Calu3 (cell line): ENCODE measurements at regions of chr3 and their contacts with region 1.

Region 1: GRCh38 chr3:50611464-50612233 is at the start of gene CISH:
- DNase-seq: peak; percentile 89
- H3K4me3 Mint-ChIP-seq: peak within 1 kb of the TSS; percentile 74
- H3K27ac Mint-ChIP-seq: peak within 1 kb of the TSS; percentile 24
- H3K4me1 Mint-ChIP-seq: peaks cover 28% of the 10 kb centered on the region
- H3K27me3 Mint-ChIP-seq: peaks cover 13% of the 10 kb centered on the region
- CTCF ChIP-seq: peak; percentile 28
- total RNA-seq, gene CISH: 1.4 and 1.6 TPM in 2 replicates

Region 2: GRCh38 chr3:50474717-50475116 is 136.9 kb before region 1 on chr3:
- CTCF ChIA-PET with region 1: no interaction called
- intact Hi-C with region 1: no loop called
- DNase-seq: no peak
- H3K4me3 Mint-ChIP-seq: no peak overlapping the region
- H3K27ac Mint-ChIP-seq: no peak overlapping the region
- H3K4me1 Mint-ChIP-seq: no peaks in the 10 kb centered on the region
- H3K27me3 Mint-ChIP-seq: peaks cover 80% of the 10 kb centered on the region
- CTCF ChIP-seq: no peak

Region 3: GRCh38 chr3:50519471-50520089 is 92.1 kb before region 1 on chr3:
- CTCF ChIA-PET with region 1: interaction called, 4 read pairs
- intact Hi-C with region 1: loop called (anchors 1 kb)
- DNase-seq: peak; percentile 83
- H3K4me3 Mint-ChIP-seq: no peak overlapping the region
- H3K27ac Mint-ChIP-seq: no peak overlapping the region
- H3K4me1 Mint-ChIP-seq: no peaks in the 10 kb centered on the region
- H3K27me3 Mint-ChIP-seq: peaks cover 100% of the 10 kb centered on the region
- CTCF ChIP-seq: peak; percentile 83

Region 4: GRCh38 chr3:50600841-50601591 is 10.6 kb before region 1 on chr3:
- CTCF ChIA-PET with region 1: interaction called, 16 read pairs
- intact Hi-C with region 1: no loop called
- DNase-seq: peak; percentile 91
- H3K4me3 Mint-ChIP-seq: peak overlapping the region; percentile 59
- H3K27ac Mint-ChIP-seq: peak overlapping the region; percentile 88
- H3K4me1 Mint-ChIP-seq: peaks cover 46% of the 10 kb centered on the region
- H3K27me3 Mint-ChIP-seq: no peaks in the 10 kb centered on the region
- CTCF ChIP-seq: no peak

Region 5: DNA sequence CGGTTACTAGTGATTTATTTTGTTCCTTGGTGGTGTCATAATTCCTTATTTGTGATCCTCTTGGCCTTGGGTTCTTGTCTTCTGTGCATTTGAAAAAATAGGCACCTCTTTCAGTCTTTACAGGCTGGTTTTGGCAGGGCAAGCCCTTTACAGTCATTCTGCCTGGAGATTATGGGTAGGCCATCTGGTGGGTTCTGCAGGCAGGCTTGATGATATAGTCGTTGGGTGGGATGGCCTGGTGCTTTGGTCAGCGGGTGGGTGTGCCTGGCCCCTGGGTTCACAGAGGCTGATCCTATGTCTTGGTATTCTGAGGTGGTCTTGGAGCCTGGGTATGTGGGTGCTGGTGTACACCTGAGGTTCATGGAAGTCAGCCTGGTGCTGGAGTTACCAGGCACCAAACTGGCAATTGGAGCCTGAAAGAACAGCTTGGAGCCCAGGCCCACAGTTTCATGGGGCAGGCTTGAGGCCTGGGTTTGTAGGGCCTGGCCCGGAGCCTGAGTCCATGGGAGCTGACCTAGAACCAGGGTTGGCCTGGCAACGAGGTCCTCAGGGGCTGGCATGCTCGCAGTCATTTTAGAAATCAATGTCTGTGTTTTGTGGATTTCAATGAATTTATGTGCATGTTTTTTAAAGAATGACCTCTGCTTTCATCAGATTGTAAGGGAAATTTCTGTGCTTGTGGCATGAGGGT is 126.4 kb after region 1 on chr3:
- CTCF ChIA-PET with region 1: no interaction called
- intact Hi-C with region 1: no loop called
- DNase-seq: no peak
- H3K4me3 Mint-ChIP-seq: no peak overlapping the region
- H3K27ac Mint-ChIP-seq: no peak overlapping the region
- H3K4me1 Mint-ChIP-seq: no peaks in the 10 kb centered on the region
- H3K27me3 Mint-ChIP-seq: no peaks in the 10 kb centered on the region
- CTCF ChIP-seq: no peak

Region 6: DNA sequence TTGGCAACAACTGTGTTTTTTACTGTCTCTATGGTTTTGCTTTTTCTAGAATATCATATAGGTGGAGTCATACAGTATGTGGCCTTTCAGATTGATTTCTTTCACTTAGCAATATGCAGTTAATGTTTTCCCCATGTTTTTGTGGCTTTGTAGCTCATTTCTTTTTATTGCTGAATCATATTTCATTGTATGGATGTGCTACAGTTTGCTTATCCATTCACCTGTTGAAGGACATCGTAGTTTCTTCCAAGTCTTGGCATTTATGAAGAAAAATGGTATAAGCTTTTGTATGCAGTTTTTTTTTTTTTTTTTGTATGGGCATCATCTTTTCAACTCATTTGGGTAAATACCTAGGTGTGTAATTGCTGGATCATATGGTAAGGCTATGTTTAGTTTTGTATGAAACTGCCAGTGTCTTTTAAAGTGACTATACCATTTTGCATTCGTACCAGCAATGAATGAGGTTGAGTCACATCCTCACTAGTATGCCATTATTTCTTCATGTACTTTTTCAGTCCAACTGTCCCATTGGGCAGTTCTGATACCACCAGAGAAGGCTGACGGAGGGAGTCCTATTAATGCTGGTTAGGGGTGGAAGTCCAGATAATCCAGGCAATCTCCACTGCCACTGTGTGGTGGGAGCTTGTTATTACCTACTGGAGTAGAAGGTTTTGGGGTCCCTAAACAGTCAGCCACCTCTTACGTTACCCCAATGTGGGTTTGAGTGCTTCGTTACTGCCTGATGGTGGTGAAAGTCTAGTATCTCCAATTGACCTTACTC is 273.6 kb after region 1 on chr3:
- CTCF ChIA-PET with region 1: interaction called, 3 read pairs
- intact Hi-C with region 1: loop called (anchors 2 kb)
- DNase-seq: peak; percentile 2
- H3K4me3 Mint-ChIP-seq: no peak overlapping the region
- H3K27ac Mint-ChIP-seq: no peak overlapping the region
- H3K4me1 Mint-ChIP-seq: no peaks in the 10 kb centered on the region
- H3K27me3 Mint-ChIP-seq: peaks cover 29% of the 10 kb centered on the region
- CTCF ChIP-seq: no peak

Region 7: DNA sequence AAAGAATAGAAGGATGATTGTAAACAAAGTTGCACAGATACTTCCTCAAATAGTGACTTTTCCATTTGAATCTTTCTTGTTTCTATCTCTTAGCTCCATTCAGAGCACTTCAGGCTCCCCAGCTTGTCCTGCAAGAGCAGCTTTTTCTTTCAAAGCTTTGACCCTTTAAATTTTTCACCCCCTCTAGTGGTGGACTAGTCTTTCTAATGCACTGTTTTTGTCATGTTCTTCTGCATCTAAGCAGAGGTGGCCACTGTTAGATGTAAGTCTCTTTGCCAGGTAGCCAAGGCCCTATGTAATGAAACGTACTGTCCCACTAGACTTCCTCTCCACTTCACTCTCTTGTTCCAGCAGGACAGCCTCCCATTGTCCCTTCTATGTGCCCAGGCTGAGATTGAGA is 699.4 kb after region 1 on chr3:
- CTCF ChIA-PET with region 1: interaction called, 15 read pairs
- intact Hi-C with region 1: no loop called
- DNase-seq: no peak
- H3K4me3 Mint-ChIP-seq: no peak overlapping the region
- H3K27ac Mint-ChIP-seq: no peak overlapping the region
- H3K4me1 Mint-ChIP-seq: no peaks in the 10 kb centered on the region
- H3K27me3 Mint-ChIP-seq: peaks cover 23% of the 10 kb centered on the region
- CTCF ChIP-seq: peak; percentile 39

Region 8: DNA sequence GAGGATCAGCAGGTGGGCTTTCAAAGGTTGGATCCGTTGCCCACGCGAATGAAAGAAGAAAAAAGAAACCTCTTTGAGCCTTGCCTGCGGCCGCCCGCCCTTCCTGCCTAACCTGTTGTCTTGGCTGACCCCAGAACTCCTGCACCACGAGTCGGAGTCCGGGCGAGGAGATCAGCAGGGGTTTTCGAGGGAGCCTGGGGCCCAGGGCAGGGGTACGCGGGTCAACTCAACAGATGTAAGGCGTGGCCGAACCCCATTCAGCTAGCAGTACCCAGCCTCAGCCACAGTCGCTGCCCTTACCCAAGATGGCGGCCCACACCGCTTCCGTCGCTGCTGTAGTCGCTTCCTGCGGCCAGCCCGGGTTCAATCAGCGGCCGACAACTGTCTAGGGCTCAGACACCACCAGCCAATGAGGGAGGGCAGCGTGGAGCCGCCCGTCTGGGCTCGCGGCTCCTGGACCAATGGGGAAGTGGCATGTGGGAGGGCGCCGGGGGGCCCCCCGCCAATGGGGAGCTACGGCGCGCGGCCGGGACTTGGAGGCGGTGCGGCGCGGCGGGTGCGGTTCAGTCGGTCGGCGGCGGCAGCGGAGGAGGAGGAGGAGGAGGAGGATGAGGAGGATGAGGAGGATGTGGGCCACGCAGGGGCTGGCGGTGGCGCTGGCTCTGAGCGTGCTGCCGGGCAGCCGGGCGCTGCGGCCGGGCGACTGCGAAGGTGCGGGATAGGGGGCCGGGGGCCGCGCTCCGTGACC is 773.3 kb after region 1 on chr3 and contains the start of gene MANF:
- CTCF ChIA-PET with region 1: no interaction called
- intact Hi-C with region 1: loop called (anchors 5 kb)
- DNase-seq: peak; percentile 97
- H3K4me3 Mint-ChIP-seq: peak within 1 kb of the TSS; percentile 93
- H3K27ac Mint-ChIP-seq: peak within 1 kb of the TSS; percentile 99
- H3K4me1 Mint-ChIP-seq: peaks cover 32% of the 10 kb centered on the region
- H3K27me3 Mint-ChIP-seq: no peaks in the 10 kb centered on the region
- CTCF ChIP-seq: no peak
- total RNA-seq, gene MANF: 140 and 176 TPM in 2 replicates